Prostate gland (tissue), 2 donors: ENCODE measurements at regions of chr16 and their contacts with region 1.

Region 1: DNA sequence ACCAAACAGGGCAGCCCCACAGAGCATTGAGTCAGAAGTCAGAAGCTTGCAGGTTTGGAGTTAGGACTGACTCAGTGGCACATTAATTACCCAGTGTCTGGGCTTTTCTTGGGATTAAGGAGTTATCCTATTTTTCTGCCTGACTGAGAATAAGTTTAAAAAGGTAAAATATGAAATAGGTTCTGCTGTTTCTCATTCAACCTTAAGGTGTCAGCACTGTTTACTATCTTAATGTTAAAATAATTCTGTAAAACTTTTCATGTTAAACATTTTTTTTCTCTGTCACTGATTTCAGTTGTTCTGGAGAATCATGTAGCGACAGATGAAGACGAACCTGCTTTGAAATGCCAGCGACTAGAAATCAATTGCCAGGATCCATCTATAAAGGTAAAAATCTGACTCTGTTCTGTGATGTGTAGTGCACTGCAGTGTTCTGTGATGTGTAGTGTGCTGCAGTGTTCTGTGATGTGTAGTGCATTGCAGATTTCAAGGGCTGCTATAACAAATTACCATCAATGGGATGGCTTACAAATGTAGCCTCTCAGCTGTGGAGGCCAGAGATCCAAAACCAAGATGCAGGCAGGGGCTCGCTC is 128.0 kb downstream of the LAT start:
- DNase-seq: no peak
- H3K4me3 ChIP-seq: no peak overlapping the region
- H3K27ac ChIP-seq: no peak overlapping the region
- H3K4me1 ChIP-seq: no peaks in the 10 kb centered on the region
- H3K27me3 ChIP-seq: no peaks in the 10 kb centered on the region
- CTCF ChIP-seq: no peak
- POLR2A ChIP-seq: no peak

Region 2: DNA sequence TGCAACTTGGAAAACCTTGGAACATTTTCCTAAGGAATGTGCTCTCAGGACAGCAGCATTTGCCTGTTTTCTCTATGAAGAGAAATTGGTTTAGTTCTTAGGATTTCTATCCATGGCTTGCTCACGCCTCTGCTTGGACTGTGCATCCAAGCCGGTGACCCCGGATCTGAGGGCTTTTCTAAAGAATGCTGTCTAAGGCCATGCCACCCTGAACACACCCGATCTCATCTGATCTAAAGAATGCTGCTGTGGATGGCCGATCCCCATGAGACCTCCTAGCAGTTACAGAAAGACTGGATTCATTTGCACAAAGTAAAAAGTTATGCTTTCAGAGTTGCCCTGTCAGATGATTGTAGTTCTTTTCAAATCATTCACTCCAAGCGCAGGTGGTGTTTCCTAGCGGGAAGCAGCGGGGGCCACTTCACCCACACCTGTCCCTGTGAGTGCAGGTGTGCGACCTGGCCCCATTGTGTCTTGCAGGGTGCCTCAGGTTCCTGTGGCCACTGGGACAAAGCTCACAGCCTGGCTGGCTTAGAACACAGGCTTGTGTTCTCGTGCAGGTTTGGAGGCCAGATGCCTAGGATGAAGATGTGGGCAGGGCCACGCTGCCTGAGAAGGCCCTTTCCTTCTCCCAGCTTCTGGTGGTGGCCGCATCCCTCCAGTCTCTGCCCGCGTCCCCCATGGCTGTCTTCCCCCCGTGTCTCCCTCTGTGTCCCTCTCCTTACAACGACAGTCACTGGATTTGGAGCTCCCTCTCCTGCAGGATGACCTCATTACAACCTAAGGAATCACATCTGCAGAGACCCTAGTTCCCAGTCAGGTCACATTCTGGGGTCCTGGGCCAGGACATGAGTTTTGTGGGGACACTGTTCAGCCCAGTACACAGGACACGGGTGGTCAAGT is 203.0 kb after region 1 on chr16:
- intact Hi-C with region 1: loop called (anchors 10 kb)
- DNase-seq: no peak
- H3K4me3 ChIP-seq: no peak overlapping the region
- H3K27ac ChIP-seq: no peak overlapping the region
- H3K4me1 ChIP-seq: no peaks in the 10 kb centered on the region
- H3K27me3 ChIP-seq: no peaks in the 10 kb centered on the region
- CTCF ChIP-seq: peak in 1 of 4 experiments; percentile 47
- POLR2A ChIP-seq: no peak